ENCODE measurements at regions of chr16 and their contacts with region 1.

Region 1: DNA sequence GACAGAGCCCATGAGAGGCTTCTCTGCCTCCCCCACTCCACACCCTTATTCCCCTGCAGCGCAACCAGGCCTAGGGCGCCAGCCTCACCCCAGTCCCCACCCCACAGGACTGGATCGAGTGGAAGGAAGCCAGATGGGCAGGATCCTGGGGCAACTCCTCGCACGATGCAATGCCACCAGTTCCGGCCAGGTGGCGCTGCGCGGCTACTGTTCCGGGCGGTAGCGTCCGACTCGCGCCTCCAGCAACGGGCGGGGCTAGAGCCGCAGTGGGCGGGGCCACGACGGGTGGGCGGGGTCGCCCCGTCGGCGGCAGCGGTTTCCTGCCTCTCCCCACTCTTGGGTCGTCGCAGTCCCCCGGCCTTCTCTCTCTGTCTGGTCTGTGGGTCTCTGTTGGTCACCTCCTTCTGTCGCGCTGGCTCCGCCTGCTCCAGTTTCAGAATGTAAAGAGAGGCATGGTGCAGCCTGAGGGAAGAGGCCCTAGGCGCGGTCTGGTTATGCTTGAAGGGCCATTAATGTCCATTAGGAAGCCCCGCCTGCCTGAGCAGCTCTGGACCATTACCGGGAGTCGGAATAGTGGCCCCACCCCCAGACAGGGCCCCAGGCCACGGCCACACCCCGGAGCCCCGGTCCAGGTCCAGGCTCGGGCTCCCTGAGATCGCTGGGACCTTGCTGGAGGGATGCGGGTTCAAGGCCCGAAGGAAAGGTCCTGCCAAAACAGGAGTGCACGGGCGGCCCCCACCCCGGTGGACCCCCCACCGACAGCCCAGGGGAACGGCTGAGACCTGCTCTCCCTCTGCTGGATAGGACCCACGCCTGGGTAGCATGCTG is 3.4 kb upstream of the NHERF2 start:
- DNase-seq: peak; percentile 92
- H3K4me3 ChIP-seq: peak overlapping the region in 2 of 3 experiments; percentile 20 to 24
- H3K27ac ChIP-seq: peak overlapping the region; percentile 56
- H3K4me1 ChIP-seq: peaks cover 27% of the 10 kb centered on the region
- H3K27me3 ChIP-seq: peaks cover 4 to 11% of the 10 kb centered on the region in 2 experiments
- CTCF ChIP-seq: peak; percentile 94 to 96
- POLR2A ChIP-seq: peak; percentile 37

Region 2: GRCh38 chr16:1258906-1259759 is 764.2 kb before region 1 on chr16:
- CTCF ChIA-PET with region 1: no interaction called
- POLR2A ChIA-PET with region 1: no interaction called
- dilution Hi-C with region 1: no loop called
- intact Hi-C with region 1: no loop called
- DNase-seq: no peak
- H3K4me3 ChIP-seq: no peak overlapping the region
- H3K27ac ChIP-seq: no peak overlapping the region
- H3K4me1 ChIP-seq: no peaks in the 10 kb centered on the region
- H3K27me3 ChIP-seq: peaks cover 21 to 25% of the 10 kb centered on the region in 2 experiments
- CTCF ChIP-seq: no peak
- POLR2A ChIP-seq: no peak

Region 3: DNA sequence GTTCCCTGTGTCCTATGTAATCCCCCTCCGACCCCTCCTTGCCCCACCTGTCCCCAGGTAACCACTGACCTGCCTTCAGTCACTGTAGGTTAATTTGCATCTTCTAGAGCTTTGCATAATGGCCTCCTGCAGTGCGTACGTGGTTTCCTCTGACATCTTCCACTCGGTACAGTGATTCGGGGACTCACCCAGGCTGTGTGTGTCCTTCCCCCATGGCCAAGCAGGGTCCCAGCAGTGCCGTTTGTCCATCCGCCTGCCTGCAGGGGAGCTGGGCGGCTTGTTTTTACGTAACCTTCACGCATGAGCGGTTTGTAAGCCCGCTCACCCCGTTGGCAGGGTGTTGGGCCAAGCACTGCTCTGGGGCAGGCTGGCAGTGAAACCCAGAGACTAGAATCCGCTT is 309.4 kb before region 1 on chr16:
- CTCF ChIA-PET with region 1: no interaction called
- POLR2A ChIA-PET with region 1: no interaction called
- dilution Hi-C with region 1: no loop called
- intact Hi-C with region 1: no loop called
- DNase-seq: no peak
- H3K4me3 ChIP-seq: no peak overlapping the region
- H3K27ac ChIP-seq: no peak overlapping the region
- H3K4me1 ChIP-seq: no peaks in the 10 kb centered on the region
- H3K27me3 ChIP-seq: no peaks in the 10 kb centered on the region
- CTCF ChIP-seq: no peak
- POLR2A ChIP-seq: no peak

Region 4: DNA sequence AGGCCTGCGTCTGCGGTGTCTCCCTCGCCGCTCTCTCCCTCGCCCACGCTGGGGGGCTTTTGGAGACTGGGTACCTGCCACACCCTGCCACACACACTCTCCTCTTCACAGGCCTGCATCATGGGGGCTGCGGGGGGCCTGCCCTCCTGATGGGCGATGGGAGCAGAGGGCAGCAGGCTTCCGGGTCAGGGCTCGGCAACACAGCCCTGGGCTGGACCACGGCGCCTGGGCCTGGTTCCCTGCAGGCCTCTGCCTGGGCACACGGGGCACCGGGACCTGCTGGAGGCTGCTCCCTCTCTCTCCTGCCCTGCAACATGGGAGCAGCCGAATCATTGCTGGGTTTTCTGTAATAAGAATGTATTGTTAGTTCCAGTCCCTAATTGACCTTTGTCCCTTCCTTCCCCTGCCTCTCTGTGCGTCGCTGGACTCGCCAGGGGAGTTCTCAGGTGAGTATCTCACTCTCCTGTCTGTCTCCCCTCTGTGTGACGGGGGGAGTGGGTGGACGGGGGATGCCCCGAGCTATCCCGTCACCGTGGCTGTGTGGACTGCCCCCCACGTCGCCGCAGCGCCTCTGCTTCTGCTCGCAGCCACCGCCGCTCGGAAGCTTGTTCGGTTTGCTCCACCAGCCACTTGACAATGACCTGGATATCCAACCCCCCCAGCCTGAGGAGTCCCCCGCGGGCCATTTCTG is 265.5 kb before region 1 on chr16:
- CTCF ChIA-PET with region 1: no interaction called
- POLR2A ChIA-PET with region 1: no interaction called
- dilution Hi-C with region 1: no loop called
- intact Hi-C with region 1: no loop called
- DNase-seq: no peak
- H3K4me3 ChIP-seq: no peak overlapping the region
- H3K27ac ChIP-seq: no peak overlapping the region
- H3K4me1 ChIP-seq: no peaks in the 10 kb centered on the region
- H3K27me3 ChIP-seq: no peaks in the 10 kb centered on the region
- CTCF ChIP-seq: no peak
- POLR2A ChIP-seq: no peak

Region 5: DNA sequence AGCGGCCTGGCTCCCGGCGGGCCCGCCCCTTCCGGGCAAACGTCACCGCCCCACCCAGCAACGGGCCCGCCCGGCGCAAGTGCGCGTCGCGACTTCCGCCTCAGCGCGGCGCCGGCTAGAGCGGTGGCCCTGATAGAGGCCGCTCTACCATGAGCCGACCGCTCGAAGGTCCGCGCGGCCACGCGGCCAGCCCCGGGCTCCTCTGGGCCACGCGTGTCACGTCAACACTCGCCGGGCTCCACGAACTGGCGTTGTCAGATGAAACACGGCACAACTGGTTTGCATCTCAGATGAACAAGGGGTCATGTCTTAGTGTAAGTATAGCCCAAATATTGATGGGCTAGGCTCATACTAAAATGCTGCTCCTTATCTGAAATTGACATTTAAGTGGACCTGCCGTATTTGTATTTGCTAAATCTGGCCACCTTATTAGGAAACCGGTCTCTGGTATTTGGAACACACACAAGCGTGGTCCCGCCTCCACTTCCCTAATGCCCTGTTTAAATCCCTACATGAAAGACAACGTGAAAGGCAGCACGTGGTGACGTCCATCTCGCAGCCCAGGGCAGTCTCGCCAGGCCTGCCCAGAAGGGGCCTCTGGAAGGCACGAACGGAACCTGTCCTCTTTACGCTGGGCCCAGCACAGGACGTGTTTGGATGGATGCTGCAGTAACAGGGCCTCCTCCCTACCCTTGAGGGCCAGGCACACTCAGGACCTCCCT is 13.4 kb before region 1 on chr16 and contains the start of gene ZNF598:
- CTCF ChIA-PET with region 1: interaction called, 12 read pairs
- POLR2A ChIA-PET with region 1: no interaction called
- dilution Hi-C with region 1: no loop called
- intact Hi-C with region 1: no loop called
- DNase-seq: peak; percentile 72
- H3K4me3 ChIP-seq: peak within 1 kb of the TSS; percentile 72 to 85 (median 76)
- H3K27ac ChIP-seq: peak within 1 kb of the TSS; percentile 86
- H3K4me1 ChIP-seq: peaks cover 41% of the 10 kb centered on the region
- H3K27me3 ChIP-seq: no peaks in the 10 kb centered on the region
- CTCF ChIP-seq: no peak
- POLR2A ChIP-seq: peak; percentile 94
- total RNA-seq, gene ZNF598: 60.5 and 67.0 TPM in 2 replicates

Region 6: GRCh38 chr16:2047330-2048115 is 24.2 kb after region 1 on chr16 and contains the starts of genes NTHL1 and TSC2:
- CTCF ChIA-PET with region 1: interaction called, 28 read pairs
- POLR2A ChIA-PET with region 1: no interaction called
- dilution Hi-C with region 1: no loop called
- intact Hi-C with region 1: loop called (anchors 2 kb)
- DNase-seq: peak; percentile 97
- H3K4me3 ChIP-seq: peak within 1 kb of the TSS; percentile 67 to 82 (median 72)
- H3K27ac ChIP-seq: no peak within 1 kb of the TSS
- H3K4me1 ChIP-seq: peaks cover 35% of the 10 kb centered on the region
- H3K27me3 ChIP-seq: no peaks in the 10 kb centered on the region
- CTCF ChIP-seq: peak in 1 of 2 donors; percentile 35
- POLR2A ChIP-seq: peak; percentile 88
- total RNA-seq, gene NTHL1: 35.3 and 39.8 TPM in 2 replicates
- total RNA-seq, gene TSC2: 144 TPM in 2 replicates

Region 7: DNA sequence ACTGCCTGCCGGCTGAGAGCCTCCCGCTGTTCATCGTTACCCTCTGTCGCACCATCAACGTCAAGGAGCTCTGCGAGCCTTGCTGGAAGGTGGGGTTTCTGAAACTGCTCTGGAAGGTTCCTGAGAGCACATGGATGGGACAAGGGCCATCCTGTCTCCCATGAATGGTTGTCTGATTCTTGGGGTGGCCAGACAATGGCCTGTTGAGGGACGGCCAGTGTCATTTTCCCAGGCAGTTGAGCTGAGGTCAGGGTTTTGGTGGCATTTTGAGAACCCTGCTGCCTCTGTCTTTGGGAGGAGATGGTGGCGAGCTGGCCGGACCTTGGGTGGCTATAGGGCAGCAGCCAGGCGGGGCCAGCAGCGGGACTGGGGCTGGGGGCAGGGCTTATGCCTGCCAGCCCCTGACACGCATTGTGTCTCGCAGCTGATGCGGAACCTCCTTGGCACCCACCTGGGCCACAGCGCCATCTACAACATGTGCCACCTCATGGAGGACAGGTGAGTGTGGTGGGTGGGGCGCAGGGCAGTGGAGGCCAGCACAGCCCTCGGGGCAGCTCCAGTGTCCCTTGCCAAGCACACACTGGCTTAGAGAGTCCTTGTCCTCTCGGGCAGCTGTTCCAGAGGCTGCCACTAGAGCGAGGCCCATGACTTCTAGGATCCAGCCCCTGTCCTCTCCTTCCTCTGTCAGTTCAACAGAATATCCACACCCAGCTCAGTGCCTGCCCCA is 33.5 kb after region 1 on chr16:
- CTCF ChIA-PET with region 1: interaction called, 93 read pairs
- POLR2A ChIA-PET with region 1: no interaction called
- dilution Hi-C with region 1: no loop called
- intact Hi-C with region 1: loop called (anchors 2 kb)
- DNase-seq: no peak
- H3K4me3 ChIP-seq: no peak overlapping the region
- H3K27ac ChIP-seq: no peak overlapping the region
- H3K4me1 ChIP-seq: no peaks in the 10 kb centered on the region
- H3K27me3 ChIP-seq: no peaks in the 10 kb centered on the region
- CTCF ChIP-seq: no peak
- POLR2A ChIP-seq: no peak

Region 8: DNA sequence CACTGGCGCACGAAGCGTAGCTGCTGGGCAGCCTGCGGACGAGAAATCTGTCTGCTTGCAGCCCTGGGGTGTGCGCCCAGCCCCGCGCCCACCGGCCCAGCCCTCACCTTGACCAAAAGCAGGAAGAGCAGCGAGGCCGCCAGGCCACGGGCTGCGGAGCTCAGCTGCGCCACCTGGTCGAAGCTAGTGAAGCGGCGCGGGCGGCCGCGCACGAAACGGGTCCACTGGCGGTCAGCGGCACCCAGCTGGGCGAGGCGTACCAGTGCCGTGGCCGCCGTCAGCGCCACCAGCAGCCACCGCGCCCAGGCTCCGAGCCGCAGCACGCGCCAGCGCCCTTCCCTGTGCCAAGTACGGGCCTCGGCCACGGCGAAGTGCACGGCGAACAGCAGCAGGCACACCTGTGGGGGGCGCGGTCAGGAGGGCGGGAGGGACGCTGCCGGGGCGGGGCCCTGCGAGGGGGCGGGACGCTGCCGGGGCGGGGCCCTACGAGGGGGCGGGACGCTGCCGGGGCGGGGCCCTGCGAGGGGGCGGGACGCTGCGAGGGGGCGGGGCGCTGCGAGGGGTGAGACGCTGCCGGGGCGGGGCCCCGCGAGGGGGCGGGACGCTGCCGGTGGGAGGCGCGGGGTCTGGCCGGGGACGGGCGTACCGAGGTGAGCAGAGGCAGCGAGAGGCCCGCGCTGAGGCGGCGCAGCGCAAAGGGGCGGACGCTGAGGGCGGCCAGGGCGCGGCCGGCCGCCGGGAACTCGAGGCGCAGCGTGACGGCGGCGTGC is 67.7 kb after region 1 on chr16:
- CTCF ChIA-PET with region 1: interaction called, 15 read pairs
- POLR2A ChIA-PET with region 1: no interaction called
- dilution Hi-C with region 1: no loop called
- intact Hi-C with region 1: loop called (anchors 2 kb)
- DNase-seq: peak; percentile 77
- H3K4me3 ChIP-seq: peak overlapping the region in 1 of 3 experiments; percentile 24
- H3K27ac ChIP-seq: no peak overlapping the region
- H3K4me1 ChIP-seq: peaks cover 5% of the 10 kb centered on the region
- H3K27me3 ChIP-seq: no peaks in the 10 kb centered on the region
- CTCF ChIP-seq: peak; percentile 8 to 47
- POLR2A ChIP-seq: peak; percentile 21

Region 9: GRCh38 chr16:2147981-2148671 is 124.8 kb after region 1 on chr16 and contains the start of gene RAB26:
- CTCF ChIA-PET with region 1: interaction called, 14 read pairs
- POLR2A ChIA-PET with region 1: interaction called, 3 read pairs
- dilution Hi-C with region 1: loop called (anchors 25 kb)
- intact Hi-C with region 1: no loop called
- DNase-seq: peak; percentile 46
- H3K4me3 ChIP-seq: peak within 1 kb of the TSS; percentile 10 to 32 (median 13)
- H3K27ac ChIP-seq: no peak within 1 kb of the TSS
- H3K4me1 ChIP-seq: peaks cover 23% of the 10 kb centered on the region
- H3K27me3 ChIP-seq: no peaks in the 10 kb centered on the region
- CTCF ChIP-seq: no peak
- POLR2A ChIP-seq: no peak
- total RNA-seq, gene RAB26: 0.91 and 1.6 TPM in 2 replicates